Activated CD4-positive, alpha-beta memory T cell treated with anti-CD3 and anti-CD28 coated beads, Interleukin-2, amount 10 ng/mL, durations not matched to agents 7 days and 5 days (primary cell): ENCODE measurements at regions of chr3 and their contacts with region 1.

Region 1: DNA sequence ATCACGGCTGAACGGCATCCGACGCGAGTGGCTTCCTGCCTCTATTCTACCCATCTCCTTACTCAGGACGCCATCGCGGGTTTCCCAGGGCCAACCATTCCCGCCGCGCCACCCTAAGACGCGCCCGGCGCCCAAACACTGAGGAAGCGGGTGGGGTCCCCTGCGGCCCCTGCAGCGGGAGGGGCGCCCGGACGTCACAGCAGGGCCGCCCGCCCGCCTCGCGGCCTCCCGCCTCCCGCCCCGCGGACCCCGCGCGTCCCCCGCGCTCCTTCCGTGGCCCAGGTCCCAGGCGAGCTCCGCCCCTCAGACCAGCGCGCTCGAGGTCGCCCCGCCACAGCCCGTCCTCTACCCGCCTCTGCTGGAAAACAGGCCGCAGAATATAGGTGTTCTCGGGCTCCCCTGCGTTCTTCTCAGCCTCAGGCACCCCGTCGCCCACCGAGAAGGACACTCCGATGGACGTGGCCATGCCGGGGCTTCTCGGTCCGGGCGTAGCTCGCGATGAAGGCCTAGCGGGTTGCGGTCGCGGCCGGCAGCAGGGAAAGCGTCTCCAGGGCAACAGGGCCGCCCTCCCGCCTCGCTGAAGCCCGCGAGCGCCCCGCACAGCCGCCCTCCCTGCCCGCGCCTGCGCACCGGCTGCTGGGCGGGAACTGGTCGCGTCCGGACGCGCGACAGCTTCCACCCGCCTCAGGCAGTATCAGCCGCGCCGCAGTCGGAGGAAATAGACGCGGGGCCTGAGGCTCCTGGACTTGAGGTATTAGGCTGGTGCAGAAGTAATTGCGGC is at the start of gene DYNLT2B:
- DNase-seq: peak; percentile 93
- H3K4me3 Mint-ChIP-seq: peak within 1 kb of the TSS; percentile 93
- H3K27ac Mint-ChIP-seq: peak within 1 kb of the TSS; percentile 95
- H3K4me1 Mint-ChIP-seq: peaks cover 21% of the 10 kb centered on the region
- H3K27me3 Mint-ChIP-seq: no peaks in the 10 kb centered on the region
- total RNA-seq, gene DYNLT2B: 21.1 to 24.0 TPM

Region 2: GRCh38 chr3:196268270-196269163 is 49.4 kb before region 1 on chr3:
- CTCF ChIA-PET with region 1: no interaction called
- POLR2A ChIA-PET with region 1: interaction called, 42 read pairs
- DNase-seq: peak; percentile 43
- H3K4me3 Mint-ChIP-seq: no peak overlapping the region
- H3K27ac Mint-ChIP-seq: peak overlapping the region; percentile 72
- H3K4me1 Mint-ChIP-seq: peaks cover 45% of the 10 kb centered on the region
- H3K27me3 Mint-ChIP-seq: no peaks in the 10 kb centered on the region

Region 3: DNA sequence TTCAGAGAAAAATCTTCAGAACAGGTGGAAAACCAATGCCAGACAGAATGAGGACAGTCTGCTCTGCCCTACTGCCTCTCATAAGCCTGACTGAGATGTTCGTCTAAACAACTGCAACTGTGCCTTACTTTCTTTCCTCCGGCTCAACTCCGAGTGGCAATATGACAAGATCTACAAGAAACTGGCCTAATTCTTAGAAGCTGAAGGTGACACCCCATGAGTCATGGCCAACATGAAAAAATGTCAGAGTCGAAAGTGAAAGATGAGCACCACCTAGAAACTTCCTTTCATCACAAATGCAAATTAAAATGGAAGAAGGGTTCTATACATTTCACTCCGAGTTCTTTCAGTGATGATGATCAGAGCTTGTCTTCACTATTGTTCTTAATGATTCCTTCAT is 43.3 kb before region 1 on chr3:
- CTCF ChIA-PET with region 1: interaction called, 5 read pairs
- POLR2A ChIA-PET with region 1: interaction called, 42 read pairs
- DNase-seq: peak; percentile 81
- H3K4me3 Mint-ChIP-seq: peak overlapping the region; percentile 68
- H3K27ac Mint-ChIP-seq: peak overlapping the region; percentile 97
- H3K4me1 Mint-ChIP-seq: peaks cover 68% of the 10 kb centered on the region
- H3K27me3 Mint-ChIP-seq: no peaks in the 10 kb centered on the region

Region 4: GRCh38 chr3:196280689-196281440 is 37.0 kb before region 1 on chr3:
- CTCF ChIA-PET with region 1: interaction called, 7 read pairs
- POLR2A ChIA-PET with region 1: interaction called, 42 read pairs
- DNase-seq: peak; percentile 56
- H3K4me3 Mint-ChIP-seq: no peak overlapping the region
- H3K27ac Mint-ChIP-seq: peak overlapping the region; percentile 11
- H3K4me1 Mint-ChIP-seq: peaks cover 72% of the 10 kb centered on the region
- H3K27me3 Mint-ChIP-seq: no peaks in the 10 kb centered on the region

Region 5: DNA sequence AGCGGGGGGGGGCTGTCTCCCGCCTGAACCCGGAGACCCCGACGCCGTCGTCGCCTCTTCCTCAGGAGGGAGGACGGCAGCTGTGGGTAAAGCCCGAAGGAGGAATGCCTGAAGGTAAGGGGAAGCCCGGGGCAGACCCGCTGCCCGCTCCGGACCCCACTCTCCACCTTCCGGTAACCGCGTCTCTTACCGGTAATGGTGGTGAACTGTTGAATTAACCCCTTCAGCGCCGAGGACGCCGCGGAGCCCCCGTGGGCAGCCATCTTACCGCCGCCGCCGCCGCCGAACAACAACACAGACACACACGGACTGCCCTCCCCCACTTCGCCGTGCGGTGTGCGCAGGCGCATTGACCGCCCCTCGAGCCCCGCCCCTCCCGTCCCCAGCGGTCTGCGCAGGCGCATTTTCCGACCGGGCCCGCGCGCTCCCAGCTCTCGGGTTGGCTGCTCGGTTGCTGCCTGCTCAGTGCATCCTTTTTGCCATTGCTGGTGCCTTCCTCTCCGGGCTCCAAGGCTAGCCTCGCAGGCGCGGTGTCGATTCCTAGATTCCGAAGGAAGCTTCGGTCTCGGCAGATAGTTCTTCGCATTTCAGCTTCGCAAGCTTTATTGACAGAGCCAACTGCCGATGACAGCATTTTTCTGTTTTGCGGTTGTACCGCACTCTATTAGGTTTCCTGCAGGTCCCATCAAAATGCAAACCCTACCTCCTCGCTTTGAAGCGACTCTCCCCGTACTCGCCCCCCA is 114.4 kb after region 1 on chr3 and contains the start of gene UBXN7:
- CTCF ChIA-PET with region 1: no interaction called
- POLR2A ChIA-PET with region 1: interaction called, 14 read pairs
- DNase-seq: peak; percentile 98
- H3K4me3 Mint-ChIP-seq: peak within 1 kb of the TSS; percentile 77
- H3K27ac Mint-ChIP-seq: peak within 1 kb of the TSS; percentile 93
- H3K4me1 Mint-ChIP-seq: peaks cover 20% of the 10 kb centered on the region
- H3K27me3 Mint-ChIP-seq: no peaks in the 10 kb centered on the region
- total RNA-seq, gene UBXN7: 55.9 to 60.5 TPM

Region 6: DNA sequence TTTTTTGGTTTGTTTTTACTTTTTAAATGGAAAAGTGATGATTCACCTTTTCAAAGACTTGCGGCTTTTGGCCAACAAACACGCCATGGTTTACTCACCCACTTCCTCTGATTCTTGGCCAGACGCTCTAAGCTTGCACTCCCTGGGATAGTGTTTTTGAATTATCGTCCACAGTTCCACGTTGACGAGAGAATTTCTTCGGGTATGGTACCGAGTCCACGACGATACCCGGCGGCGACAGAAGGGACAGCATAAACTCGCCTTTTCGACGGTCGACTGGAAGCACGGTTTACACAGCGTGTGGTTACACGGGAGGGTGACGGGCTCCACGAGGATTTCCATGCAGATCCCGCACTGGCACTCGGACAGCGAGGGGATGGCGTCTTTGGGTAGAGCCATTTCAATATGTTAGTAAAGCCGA is 184.9 kb after region 1 on chr3:
- CTCF ChIA-PET with region 1: interaction called, 3 read pairs
- POLR2A ChIA-PET with region 1: interaction called, 13 read pairs
- DNase-seq: peak; percentile 78
- H3K4me3 Mint-ChIP-seq: peak overlapping the region; percentile 100
- H3K27ac Mint-ChIP-seq: peak overlapping the region; percentile 99
- H3K4me1 Mint-ChIP-seq: peaks cover 37% of the 10 kb centered on the region
- H3K27me3 Mint-ChIP-seq: peaks cover 3% of the 10 kb centered on the region